Ascending aorta (tissue), 2 donors: ENCODE measurements at regions of chr5 and their contacts with region 1.

Region 1: GRCh38 chr5:136080483-136081216 is 51.9 kb downstream of the TGFBI start:
- DNase-seq: peak; percentile 72 to 93
- H3K4me3 ChIP-seq: peak overlapping the region; percentile 40 to 55
- H3K27ac ChIP-seq: peak overlapping the region; percentile 70 to 76
- H3K4me1 ChIP-seq: no peaks in the 10 kb centered on the region
- H3K27me3 ChIP-seq: no peaks in the 10 kb centered on the region
- CTCF ChIP-seq: no peak

Region 2: GRCh38 chr5:135887351-135887864 is 193.2 kb before region 1 on chr5:
- intact Hi-C with region 1: loop called (anchors 5 kb)
- DNase-seq: no peak
- H3K4me3 ChIP-seq: no peak overlapping the region
- H3K27ac ChIP-seq: no peak overlapping the region
- H3K4me1 ChIP-seq: no peaks in the 10 kb centered on the region
- H3K27me3 ChIP-seq: no peaks in the 10 kb centered on the region
- CTCF ChIP-seq: peak; percentile 67 to 79 (median 71)

Region 3: GRCh38 chr5:135944967-135945560 is 135.6 kb before region 1 on chr5:
- intact Hi-C with region 1: loop called (anchors 1 kb)
- DNase-seq: peak in 1 of 2 donors; percentile 72
- H3K4me3 ChIP-seq: no peak overlapping the region
- H3K27ac ChIP-seq: no peak overlapping the region
- H3K4me1 ChIP-seq: no peaks in the 10 kb centered on the region
- H3K27me3 ChIP-seq: no peaks in the 10 kb centered on the region
- CTCF ChIP-seq: peak; percentile 67 to 83 (median 73)

Region 4: DNA sequence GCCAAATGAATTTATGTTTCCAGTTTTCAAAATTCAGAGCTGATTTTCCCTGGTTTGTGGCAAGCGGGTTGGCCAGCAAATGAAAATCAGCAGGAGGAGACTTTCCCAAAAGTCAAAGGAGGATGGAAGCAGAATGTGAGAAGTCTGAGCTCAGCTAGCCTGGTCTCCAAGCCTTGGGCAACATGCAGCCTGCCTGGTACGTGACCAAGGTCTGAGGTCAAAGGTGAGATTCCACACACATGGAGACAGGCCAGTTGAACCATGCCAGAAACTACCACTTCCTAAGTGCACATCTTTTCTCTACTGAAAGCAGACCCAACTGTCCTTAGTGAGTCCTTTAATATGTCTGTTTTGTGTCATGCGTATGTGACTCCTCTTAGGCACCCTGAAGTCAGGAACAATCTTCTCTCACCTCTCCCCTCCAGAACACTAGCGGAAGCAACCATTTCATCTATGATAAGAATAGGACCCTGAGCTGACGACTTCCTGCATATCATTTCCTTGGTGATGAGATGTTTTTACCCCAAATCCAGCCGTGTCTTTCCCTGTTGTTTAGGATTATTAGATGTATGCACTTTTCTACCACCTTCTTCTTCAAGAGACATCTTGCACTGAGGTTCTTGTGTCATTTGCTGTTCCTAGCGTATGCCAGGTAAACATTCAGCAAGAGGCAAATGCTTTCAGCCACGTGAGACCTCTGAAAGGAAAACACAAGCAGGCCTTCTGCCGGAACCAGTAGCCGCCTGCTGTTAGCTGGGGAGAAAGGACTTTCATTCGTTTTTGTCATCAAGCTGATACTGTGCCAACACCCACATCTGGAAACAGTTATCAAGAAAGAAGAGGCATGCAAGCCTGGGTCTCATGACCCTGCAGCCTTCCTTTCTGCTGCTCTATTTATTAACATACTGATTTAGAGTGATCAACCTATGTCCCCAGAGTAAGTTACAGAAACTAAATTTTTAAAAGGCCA is 61.6 kb before region 1 on chr5:
- intact Hi-C with region 1: loop called (anchors 2 kb)
- DNase-seq: peak in 1 of 2 donors; percentile 79
- H3K4me3 ChIP-seq: no peak overlapping the region
- H3K27ac ChIP-seq: peak overlapping the region in 1 of 2 donors; percentile 24
- H3K4me1 ChIP-seq: peaks cover 9 to 34% of the 10 kb centered on the region in 2 donors
- H3K27me3 ChIP-seq: no peaks in the 10 kb centered on the region
- CTCF ChIP-seq: peak in 1 of 3 experiments; percentile 13

Region 5: GRCh38 chr5:136115183-136115865 is 34.7 kb after region 1 on chr5:
- intact Hi-C with region 1: no loop called
- DNase-seq: no peak
- H3K4me3 ChIP-seq: no peak overlapping the region
- H3K27ac ChIP-seq: no peak overlapping the region
- H3K4me1 ChIP-seq: no peaks in the 10 kb centered on the region
- H3K27me3 ChIP-seq: no peaks in the 10 kb centered on the region
- CTCF ChIP-seq: no peak

Region 6: DNA sequence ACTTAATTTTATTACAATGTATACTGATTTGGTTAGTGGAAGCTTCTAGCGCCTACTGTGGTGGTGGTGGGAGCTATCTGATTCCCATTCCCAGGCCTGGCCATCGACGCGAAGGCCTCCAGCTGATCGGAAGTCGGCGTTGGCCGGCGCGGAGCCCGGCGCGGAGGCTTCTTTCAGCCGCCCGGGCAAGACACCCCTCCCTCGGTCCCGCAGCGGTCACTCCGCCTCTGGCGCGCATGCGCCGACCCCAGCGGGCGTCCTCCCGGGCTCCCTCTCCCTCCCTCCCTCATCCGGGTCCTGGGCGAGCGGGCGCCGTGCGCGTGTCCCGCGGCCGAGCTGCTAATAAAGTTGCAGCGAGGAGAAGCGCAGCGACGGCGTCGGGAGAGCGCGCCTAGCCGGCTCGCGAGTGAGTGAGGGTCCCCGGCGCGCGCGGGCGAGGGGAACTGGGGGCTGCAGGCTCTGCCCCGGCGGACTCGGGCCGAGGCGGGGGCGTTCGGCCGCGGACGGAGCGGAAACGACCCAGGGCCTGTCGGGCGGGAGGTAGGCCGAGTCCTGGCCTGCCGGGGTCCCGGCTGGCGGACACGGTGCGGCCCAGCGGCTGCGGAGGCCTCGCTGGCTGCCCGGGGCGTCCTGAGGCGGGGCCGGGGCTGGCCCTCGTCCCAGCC is 52.0 kb after region 1 on chr5 and contains the start of gene SMAD5:
- intact Hi-C with region 1: loop called (anchors 2 kb)
- DNase-seq: peak; percentile 82 to 97
- H3K4me3 ChIP-seq: peak within 1 kb of the TSS; percentile 76 to 84
- H3K27ac ChIP-seq: peak within 1 kb of the TSS; percentile 96 to 97
- H3K4me1 ChIP-seq: peaks cover 6 to 31% of the 10 kb centered on the region in 2 donors
- H3K27me3 ChIP-seq: no peaks in the 10 kb centered on the region
- CTCF ChIP-seq: no peak
- total RNA-seq, gene SMAD5: 23.8 TPM